ENCODE measurements at regions of chr19 and their contacts with region 1.

Region 1: DNA sequence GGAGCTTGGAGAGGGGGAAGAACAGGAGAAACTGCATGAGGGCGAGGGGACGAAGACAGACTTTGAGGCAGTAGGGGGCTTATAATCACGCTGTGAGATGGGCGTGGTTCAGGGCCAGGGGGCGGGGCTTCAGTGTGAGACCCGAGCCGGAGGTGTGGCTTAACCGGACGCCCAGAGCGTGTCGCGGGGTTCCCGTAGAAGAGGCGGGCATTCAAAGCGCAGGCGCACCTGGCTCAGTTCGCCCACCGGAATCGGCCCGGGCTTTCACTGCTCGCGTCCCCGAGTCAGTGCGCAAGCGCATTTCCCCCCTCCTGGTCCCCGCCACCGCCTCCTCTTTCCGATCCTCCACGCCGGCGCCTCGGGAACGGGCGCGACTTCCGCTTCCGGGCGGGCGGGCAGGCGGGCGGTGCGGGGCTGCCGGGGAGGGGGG is 225 bp upstream of the ZNF865 start:
- DNase-seq: peak; percentile 100
- H3K4me3 Mint-ChIP-seq: peak overlapping the region; percentile 86
- H3K27ac Mint-ChIP-seq: peak overlapping the region; percentile 96
- H3K4me1 Mint-ChIP-seq: peaks cover 52% of the 10 kb centered on the region
- H3K27me3 Mint-ChIP-seq: no peaks in the 10 kb centered on the region

Region 2: DNA sequence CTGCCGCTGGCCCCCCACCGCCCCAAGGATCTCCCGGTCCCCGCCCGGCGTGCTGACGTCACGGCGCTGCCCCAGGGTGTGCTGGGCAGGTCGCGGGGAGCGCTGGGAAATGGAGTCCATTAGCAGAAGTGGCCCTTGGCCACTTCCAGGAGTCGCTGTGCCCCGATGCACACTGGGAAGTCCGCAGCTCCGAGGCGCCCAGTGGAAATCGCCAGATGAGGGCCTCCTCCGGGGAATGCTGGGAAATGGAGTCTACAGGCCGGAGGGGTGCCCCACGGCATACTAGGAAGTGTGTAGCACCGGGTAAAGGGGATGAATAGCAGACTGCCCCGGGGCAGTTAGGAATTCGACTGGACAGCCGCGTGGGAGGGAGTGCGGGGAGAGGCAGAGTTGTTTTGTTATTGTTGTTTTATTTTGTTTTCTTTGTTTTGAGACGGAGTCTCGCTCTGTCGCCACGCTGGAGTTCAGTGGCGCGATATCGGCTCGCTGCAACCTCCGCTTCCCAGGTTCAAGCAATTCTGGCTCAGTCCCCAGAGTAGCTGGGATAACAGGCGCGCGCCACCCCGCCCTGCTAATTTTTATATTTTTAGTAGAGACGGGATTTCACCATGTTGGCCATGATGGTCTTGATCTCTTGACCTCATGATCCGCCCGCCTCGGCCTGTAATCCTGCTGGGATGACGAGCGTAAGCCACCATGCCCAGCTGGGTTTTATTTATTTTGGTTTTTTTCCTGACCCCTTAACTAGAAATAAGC is 487.4 kb before region 1 on chr19 and contains the start of gene PPP1R12C:
- CTCF ChIA-PET with region 1: no interaction called
- intact Hi-C with region 1: loop called (anchors 2 kb)
- DNase-seq: peak; percentile 99
- H3K4me3 Mint-ChIP-seq: peak within 1 kb of the TSS; percentile 98
- H3K27ac Mint-ChIP-seq: peak within 1 kb of the TSS; percentile 90
- H3K4me1 Mint-ChIP-seq: peaks cover 23% of the 10 kb centered on the region
- H3K27me3 Mint-ChIP-seq: peaks cover 2% of the 10 kb centered on the region
- total RNA-seq, gene PPP1R12C: 41.2 to 42.1 TPM

Region 3: GRCh38 chr19:55461259-55461973 is 143.8 kb before region 1 on chr19 and contains the start of gene ISOC2:
- CTCF ChIA-PET with region 1: no interaction called
- intact Hi-C with region 1: loop called (anchors 1 kb)
- DNase-seq: peak; percentile 100
- H3K4me3 Mint-ChIP-seq: peak within 1 kb of the TSS; percentile 93
- H3K27ac Mint-ChIP-seq: peak within 1 kb of the TSS; percentile 77
- H3K4me1 Mint-ChIP-seq: peaks cover 20% of the 10 kb centered on the region
- H3K27me3 Mint-ChIP-seq: no peaks in the 10 kb centered on the region
- total RNA-seq, gene ISOC2: 18.6 to 20.5 TPM

Region 4: GRCh38 chr19:55516878-55517620 is 88.2 kb before region 1 on chr19:
- CTCF ChIA-PET with region 1: interaction called, 10 read pairs
- intact Hi-C with region 1: loop called (anchors 1 kb)
- DNase-seq: peak; percentile 93
- H3K4me3 Mint-ChIP-seq: peak overlapping the region; percentile 59
- H3K27ac Mint-ChIP-seq: no peak overlapping the region
- H3K4me1 Mint-ChIP-seq: peaks cover 3% of the 10 kb centered on the region
- H3K27me3 Mint-ChIP-seq: peaks cover 1% of the 10 kb centered on the region

Region 5: DNA sequence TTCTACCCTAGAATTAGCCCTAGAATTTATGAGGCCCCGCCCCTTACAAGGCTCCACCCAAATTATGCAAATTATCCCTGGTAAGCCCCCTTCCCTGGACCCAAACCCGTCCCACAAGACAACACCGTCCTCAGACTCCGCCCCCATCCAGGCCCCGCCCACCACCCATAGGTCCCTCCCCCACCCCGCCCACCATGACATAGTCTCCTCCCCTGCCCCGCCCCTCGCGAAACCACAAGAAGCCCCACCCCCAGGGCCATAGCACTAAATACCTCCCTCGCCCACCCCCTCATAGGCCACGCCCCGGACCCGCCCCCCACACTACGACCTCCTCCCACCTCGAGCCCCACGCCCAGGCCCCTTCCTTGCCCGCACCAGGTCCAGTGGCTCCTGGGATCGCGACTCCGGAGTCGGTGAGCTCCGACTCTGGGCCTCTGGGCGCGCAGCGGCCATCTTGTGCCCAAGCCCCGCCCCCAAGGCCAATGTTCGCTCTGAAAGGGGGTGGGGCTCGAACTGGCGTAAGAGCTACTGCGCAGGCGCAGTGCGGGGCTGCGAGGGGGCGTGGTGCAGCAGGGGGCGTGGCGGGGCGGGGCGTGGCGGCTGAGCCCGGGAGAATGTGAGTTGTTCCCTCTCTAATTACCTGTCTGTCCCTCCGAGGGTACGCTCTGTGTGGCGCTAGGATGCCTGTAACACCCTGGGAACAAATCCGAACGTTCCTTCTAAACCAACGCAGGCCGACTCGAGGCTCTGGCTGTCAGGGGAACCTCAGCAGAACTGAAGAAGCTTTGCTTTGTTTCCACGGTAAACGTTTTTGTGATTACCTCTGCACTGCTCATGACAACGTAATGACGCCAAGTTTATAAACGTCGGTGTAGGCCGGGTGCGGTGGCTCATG is 19.1 kb after region 1 on chr19 and contains the start of gene ZNF784:
- CTCF ChIA-PET with region 1: interaction called, 41 read pairs
- intact Hi-C with region 1: loop called (anchors 1 kb)
- DNase-seq: peak; percentile 93
- H3K4me3 Mint-ChIP-seq: peak within 1 kb of the TSS; percentile 92
- H3K27ac Mint-ChIP-seq: peak within 1 kb of the TSS; percentile 95
- H3K4me1 Mint-ChIP-seq: peaks cover 56% of the 10 kb centered on the region
- H3K27me3 Mint-ChIP-seq: no peaks in the 10 kb centered on the region
- total RNA-seq, gene ZNF784: 3.7 to 4.0 TPM

Region 6: GRCh38 chr19:55643348-55644176 is 38.3 kb after region 1 on chr19 and contains the start of gene ZNF581:
- CTCF ChIA-PET with region 1: interaction called, 6 read pairs
- intact Hi-C with region 1: loop called (anchors 5 kb)
- DNase-seq: peak; percentile 82
- H3K4me3 Mint-ChIP-seq: peak within 1 kb of the TSS; percentile 93
- H3K27ac Mint-ChIP-seq: peak within 1 kb of the TSS; percentile 96
- H3K4me1 Mint-ChIP-seq: peaks cover 44% of the 10 kb centered on the region
- H3K27me3 Mint-ChIP-seq: no peaks in the 10 kb centered on the region
- total RNA-seq, gene ZNF581: 18.0 to 20.7 TPM

Measured in activated naive CD4-positive, alpha-beta T cell treated with anti-CD3 and anti-CD28 coated beads for 36 hours (primary cell).